ENCODE measurements at regions of chr4 and their contacts with region 1.

Region 1: GRCh38 chr4:143389579-143390195 is 53.0 kb downstream of the GAB1 start:
- DNase-seq: no peak
- ATAC-seq: peak; percentile 55 to 87 (median 72)
- H3K4me3 ChIP-seq: peak overlapping the region; percentile 1
- H3K27ac ChIP-seq: peak overlapping the region; percentile 71
- H3K4me1 ChIP-seq: peaks cover 86% of the 10 kb centered on the region
- H3K27me3 ChIP-seq: no peaks in the 10 kb centered on the region
- CTCF ChIP-seq: no peak

Region 2: GRCh38 chr4:143224255-143224654 is 165.4 kb before region 1 on chr4:
- intact Hi-C with region 1: loop called in 1 of 2 experiments (anchors 5 kb)
- DNase-seq: no peak
- ATAC-seq: peak; percentile 77 to 89 (median 85)
- H3K4me3 ChIP-seq: peak overlapping the region; percentile 12
- H3K27ac ChIP-seq: peak overlapping the region; percentile 67
- H3K4me1 ChIP-seq: peaks cover 33% of the 10 kb centered on the region
- H3K27me3 ChIP-seq: no peaks in the 10 kb centered on the region
- CTCF ChIP-seq: no peak